Sigmoid colon (tissue), 7 donors: ENCODE measurements at regions of chr19 and their contacts with region 1.

Region 1: DNA sequence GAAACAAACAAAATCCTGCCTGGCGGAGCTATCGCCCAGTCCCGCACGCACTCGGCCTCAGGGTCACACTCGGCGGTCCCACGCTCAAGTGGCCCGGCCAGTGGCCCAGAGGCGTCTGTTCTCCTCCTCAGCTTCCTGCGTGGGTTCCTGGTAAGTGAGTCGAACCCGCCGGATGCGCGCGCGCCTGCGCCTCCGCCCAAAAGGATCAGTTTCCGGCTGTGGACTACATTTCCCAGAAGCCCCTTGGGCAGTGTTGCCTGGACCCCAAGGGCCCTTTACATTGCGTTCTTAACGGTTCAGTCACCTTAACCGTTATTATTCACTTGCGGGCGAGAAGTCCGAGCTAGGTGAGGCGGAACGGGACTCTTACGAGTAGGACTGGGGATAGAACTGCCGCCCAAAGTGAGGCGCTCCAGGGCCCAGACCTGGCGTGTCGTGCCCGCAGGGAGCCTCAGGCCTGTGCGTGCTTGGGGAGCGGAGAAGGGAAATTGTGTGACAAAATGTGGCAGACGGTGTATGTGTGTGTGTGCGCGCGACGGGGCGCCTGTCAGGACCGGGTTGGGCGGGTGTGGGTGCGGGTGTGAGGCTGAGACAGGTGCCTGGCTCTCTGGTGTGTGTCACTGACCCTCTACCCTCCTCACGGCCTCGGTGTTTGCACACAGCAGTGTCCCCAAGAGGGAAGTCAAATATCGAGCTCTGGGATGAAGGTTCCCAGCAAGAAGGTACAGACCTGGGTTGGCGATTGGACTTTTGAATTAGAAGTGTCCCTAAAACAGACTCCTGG is at the start of gene ZNF546:
- DNase-seq: peak; percentile 95
- H3K4me3 ChIP-seq: peak within 1 kb of the TSS; percentile 56 to 80 (median 65)
- H3K27ac ChIP-seq: peak within 1 kb of the TSS; percentile 83 to 87 (median 86)
- H3K4me1 ChIP-seq: peaks cover 0 to 22% (median 13%) of the 10 kb centered on the region in 4 donors
- H3K27me3 ChIP-seq: no peaks in the 10 kb centered on the region
- CTCF ChIP-seq: no peak
- EP300 ChIP-seq: no peak
- POLR2A ChIP-seq: peak; percentile 78 to 86
- total RNA-seq, gene ZNF546: 6.0 to 12.8 (median 8.3) TPM

Region 2: GRCh38 chr19:40009674-40010073 is 12.7 kb after region 1 on chr19:
- intact Hi-C with region 1: no loop called
- DNase-seq: no peak
- H3K4me3 ChIP-seq: no peak overlapping the region
- H3K27ac ChIP-seq: no peak overlapping the region
- H3K4me1 ChIP-seq: no peaks in the 10 kb centered on the region
- H3K27me3 ChIP-seq: peaks cover 0 to 4% (median 0%) of the 10 kb centered on the region in 3 donors
- CTCF ChIP-seq: no peak
- EP300 ChIP-seq: no peak
- POLR2A ChIP-seq: no peak

Region 3: GRCh38 chr19:40089462-40089861 is 92.5 kb after region 1 on chr19:
- intact Hi-C with region 1: loop called (anchors 10 kb)
- DNase-seq: no peak
- H3K4me3 ChIP-seq: peak overlapping the region in 3 of 4 donors; percentile 64 to 86 (median 84)
- H3K27ac ChIP-seq: peak overlapping the region; percentile 86 to 93 (median 92)
- H3K4me1 ChIP-seq: peaks cover 0 to 18% (median 13%) of the 10 kb centered on the region in 4 donors
- H3K27me3 ChIP-seq: no peaks in the 10 kb centered on the region
- CTCF ChIP-seq: no peak
- EP300 ChIP-seq: no peak
- POLR2A ChIP-seq: no peak